ENCODE measurements at regions of chr2 and their contacts with region 1.

Region 1: DNA sequence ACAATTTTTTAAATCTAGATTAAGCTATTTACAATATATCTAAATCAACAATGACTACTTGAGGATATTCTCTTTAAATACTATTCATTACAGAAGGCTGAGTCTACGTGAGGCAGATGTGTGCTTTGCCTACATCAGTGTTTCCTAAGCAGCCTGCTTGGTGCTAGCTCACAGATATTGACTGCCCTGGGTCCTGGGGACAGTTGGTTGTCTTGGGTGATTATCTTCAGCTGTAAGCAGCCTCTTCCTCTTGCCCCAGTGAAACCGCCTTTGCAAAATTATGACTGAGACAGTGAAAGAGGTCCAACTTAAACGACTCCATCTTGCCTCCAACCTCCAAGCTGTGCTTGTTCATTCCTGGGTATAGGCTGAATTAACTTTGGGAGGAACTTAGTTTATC is 39.6 kb upstream of the CCDC88A start:
- DNase-seq: no peak
- H3K4me3 ChIP-seq: no peak overlapping the region
- H3K27ac ChIP-seq: no peak overlapping the region
- H3K4me1 ChIP-seq: no peaks in the 10 kb centered on the region
- H3K27me3 ChIP-seq: no peaks in the 10 kb centered on the region
- CTCF ChIP-seq: no peak
- EP300 ChIP-seq: no peak
- POLR2A ChIP-seq: no peak

Region 2: GRCh38 chr2:54303631-54304030 is 1155.6 kb before region 1 on chr2:
- in situ Hi-C with region 1: no loop called
- intact Hi-C with region 1: loop called (anchors 5 kb)
- DNase-seq: no peak
- H3K4me3 ChIP-seq: no peak overlapping the region
- H3K27ac ChIP-seq: no peak overlapping the region
- H3K4me1 ChIP-seq: no peaks in the 10 kb centered on the region
- H3K27me3 ChIP-seq: no peaks in the 10 kb centered on the region
- CTCF ChIP-seq: no peak
- EP300 ChIP-seq: no peak
- POLR2A ChIP-seq: no peak

Region 3: DNA sequence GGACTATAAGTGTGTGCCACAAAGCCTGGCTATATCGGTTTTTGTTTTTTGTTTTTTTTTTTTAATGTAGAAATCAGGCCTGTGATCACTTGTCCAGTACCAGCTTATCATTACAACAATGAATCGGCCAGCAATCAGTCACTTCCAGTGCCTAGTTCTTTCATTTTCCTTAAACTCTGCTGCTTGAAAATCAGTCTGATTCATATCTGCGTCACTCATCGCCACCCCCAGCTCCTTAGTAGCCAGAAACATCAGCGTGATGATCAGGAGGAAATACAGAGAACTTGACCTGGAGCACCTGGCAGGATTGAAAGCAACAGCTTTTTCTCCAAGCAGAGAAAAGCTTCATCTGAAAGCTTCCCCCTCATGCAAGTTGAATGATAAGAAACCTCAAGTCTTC is 927.7 kb before region 1 on chr2:
- in situ Hi-C with region 1: no loop called
- intact Hi-C with region 1: no loop called
- DNase-seq: no peak
- H3K4me3 ChIP-seq: no peak overlapping the region
- H3K27ac ChIP-seq: peak overlapping the region in 2 of 4 donors; percentile 79 to 81
- H3K4me1 ChIP-seq: peaks cover 0 to 56% (median 37%) of the 10 kb centered on the region in 4 donors
- H3K27me3 ChIP-seq: no peaks in the 10 kb centered on the region
- CTCF ChIP-seq: no peak
- EP300 ChIP-seq: no peak
- POLR2A ChIP-seq: no peak

Measured in transverse colon (tissue), 4 donors.